SK-N-SH (cell line): ENCODE measurements at regions of chr7 and their contacts with region 1.

Region 1: GRCh38 chr7:43582503-43583423 is at the start of gene STK17A:
- DNase-seq: peak; percentile 99
- H3K4me3 ChIP-seq: peak within 1 kb of the TSS; percentile 70 to 98
- H3K27ac ChIP-seq: peak within 1 kb of the TSS; percentile 83 to 88
- H3K4me1 ChIP-seq: peaks cover 15 to 20% of the 10 kb centered on the region in 2 experiments; a peak in 3 of 4 replicates
- H3K27me3 ChIP-seq: no peaks in the 10 kb centered on the region
- CTCF ChIP-seq: peak; percentile 100
- EP300 ChIP-seq: peak in 1 of 2 experiments; percentile 3; a peak in 1 of 4 replicates
- RAD21 ChIP-seq: peak; percentile 96
- polyA plus RNA-seq, gene STK17A: 47.8 and 52.0 TPM in 2 replicates

Region 2: GRCh38 chr7:43454936-43455518 is 127.7 kb before region 1 on chr7:
- CTCF ChIA-PET with region 1: interaction called, 37 read pairs
- POLR2A ChIA-PET with region 1: no interaction called
- DNase-seq: peak; percentile 70
- H3K4me3 ChIP-seq: no peak overlapping the region; a peak in 1 of 4 replicates
- H3K27ac ChIP-seq: no peak overlapping the region
- H3K4me1 ChIP-seq: peaks cover 0 to 2% of the 10 kb centered on the region in 2 experiments; a peak in 1 of 4 replicates
- H3K27me3 ChIP-seq: peaks cover 4% of the 10 kb centered on the region; the same call in 1 of the 2 replicates
- CTCF ChIP-seq: peak; percentile 70
- EP300 ChIP-seq: no peak
- RAD21 ChIP-seq: peak; percentile 76

Region 3: GRCh38 chr7:43535810-43536585 is 46.8 kb before region 1 on chr7:
- CTCF ChIA-PET with region 1: interaction called, 38 read pairs
- POLR2A ChIA-PET with region 1: interaction called, 5 read pairs
- DNase-seq: no peak
- H3K4me3 ChIP-seq: no peak overlapping the region
- H3K27ac ChIP-seq: peak overlapping the region in 1 of 2 experiments; percentile 18; a peak in 2 of 4 replicates
- H3K4me1 ChIP-seq: peaks cover 10 to 44% of the 10 kb centered on the region in 2 experiments; a peak in 3 of 4 replicates
- H3K27me3 ChIP-seq: peaks cover 26% of the 10 kb centered on the region
- CTCF ChIP-seq: no peak
- EP300 ChIP-seq: peak in 1 of 2 experiments; percentile 87; a peak in 2 of 4 replicates
- RAD21 ChIP-seq: no peak

Region 4: DNA sequence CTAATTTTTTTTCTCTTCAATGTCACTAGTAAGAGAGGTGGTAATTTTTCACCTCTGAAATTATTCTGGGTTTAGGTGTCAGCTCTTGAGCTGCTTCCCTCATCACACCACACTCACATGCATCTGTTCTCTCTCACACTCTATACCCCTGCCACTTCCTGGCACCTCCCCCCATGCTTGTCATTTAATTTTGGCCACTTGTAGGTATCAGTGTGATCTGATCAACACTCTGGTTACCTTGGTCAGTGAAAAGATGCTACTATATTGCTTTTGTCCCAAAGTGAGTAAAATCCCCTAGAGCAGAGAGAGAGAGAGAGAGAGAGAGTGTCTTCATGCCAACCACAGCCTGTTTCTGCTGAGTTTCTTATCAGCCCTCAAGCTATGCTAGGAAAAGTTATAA is 42.7 kb after region 1 on chr7:
- CTCF ChIA-PET with region 1: interaction called, 24 read pairs
- POLR2A ChIA-PET with region 1: no interaction called
- DNase-seq: no peak
- H3K4me3 ChIP-seq: no peak overlapping the region
- H3K27ac ChIP-seq: peak overlapping the region; percentile 47 to 58; a peak in 3 of 4 replicates
- H3K4me1 ChIP-seq: peaks cover 8 to 35% of the 10 kb centered on the region in 2 experiments; a peak in 3 of 4 replicates
- H3K27me3 ChIP-seq: no peaks in the 10 kb centered on the region
- CTCF ChIP-seq: no peak
- EP300 ChIP-seq: no peak
- RAD21 ChIP-seq: no peak

Region 5: DNA sequence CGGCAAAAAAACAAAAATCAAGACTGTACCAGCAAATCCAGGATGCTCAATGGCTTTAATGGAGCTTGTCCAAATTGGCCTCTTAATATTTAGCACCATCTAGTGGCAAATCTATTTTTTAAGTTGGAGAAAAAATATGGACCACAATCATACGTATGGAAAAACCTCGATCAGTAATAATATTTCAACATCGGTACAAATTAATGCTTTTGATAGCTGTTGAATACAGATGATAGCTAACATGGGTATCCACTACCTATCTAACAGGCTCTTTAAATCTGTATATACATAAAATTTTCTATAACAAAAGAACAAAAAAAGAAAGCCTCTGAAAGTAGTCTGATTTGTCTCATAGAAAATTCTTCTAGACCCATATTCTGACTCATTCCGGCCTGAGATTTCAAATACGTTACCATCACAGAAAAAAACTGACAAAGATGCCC is 117.3 kb after region 1 on chr7:
- CTCF ChIA-PET with region 1: interaction called, 346 read pairs
- POLR2A ChIA-PET with region 1: interaction called, 9 read pairs
- DNase-seq: peak; percentile 59
- H3K4me3 ChIP-seq: peak overlapping the region in 1 of 2 experiments; percentile 10; a peak in 1 of 4 replicates
- H3K27ac ChIP-seq: peak overlapping the region in 1 of 2 experiments; percentile 74; a peak in 2 of 4 replicates
- H3K4me1 ChIP-seq: peaks cover 12 to 40% of the 10 kb centered on the region in 2 experiments; a peak in 3 of 4 replicates
- H3K27me3 ChIP-seq: no peaks in the 10 kb centered on the region
- CTCF ChIP-seq: peak; percentile 94
- EP300 ChIP-seq: no peak
- RAD21 ChIP-seq: peak; percentile 98

Region 6: DNA sequence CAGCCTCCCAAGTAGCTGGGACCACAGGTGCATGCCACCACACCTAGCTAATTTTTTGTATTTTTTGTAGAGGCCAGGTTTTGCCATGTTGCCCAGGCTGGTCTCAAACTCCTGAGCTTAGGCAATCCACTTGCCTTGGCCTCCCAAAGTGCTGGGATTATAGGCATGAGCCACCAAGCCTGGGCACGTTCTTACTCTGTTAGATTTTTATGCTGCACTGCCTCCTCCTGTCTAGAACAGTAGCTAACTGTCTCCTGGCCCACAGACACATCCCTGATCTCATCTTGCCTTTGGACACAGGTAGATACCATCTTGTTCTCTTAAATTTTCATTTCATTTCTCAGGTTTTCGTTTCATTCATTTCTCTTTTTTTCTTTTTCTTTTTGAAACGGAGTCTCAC is 216.8 kb after region 1 on chr7:
- CTCF ChIA-PET with region 1: interaction called, 13 read pairs
- POLR2A ChIA-PET with region 1: no interaction called
- DNase-seq: no peak
- H3K4me3 ChIP-seq: no peak overlapping the region
- H3K27ac ChIP-seq: no peak overlapping the region
- H3K4me1 ChIP-seq: no peaks in the 10 kb centered on the region
- H3K27me3 ChIP-seq: no peaks in the 10 kb centered on the region
- CTCF ChIP-seq: peak; percentile 11; the same call in 1 of the 2 replicates
- EP300 ChIP-seq: no peak
- RAD21 ChIP-seq: no peak; the same call in 1 of the 2 replicates